ENCODE measurements at regions of chr5 and their contacts with region 1.

Region 1: GRCh38 chr5:151315998-151316597 is 12.5 kb upstream of the SLC36A3 start:
- DNase-seq: peak; percentile 74 to 81
- H3K4me3 ChIP-seq: no peak overlapping the region
- H3K4me3 Mint-ChIP-seq: no peak overlapping the region
- H3K27ac Mint-ChIP-seq: no peak overlapping the region
- H3K4me1 ChIP-seq: peaks cover 8% of the 10 kb centered on the region; the same call in 1 of the 2 replicates
- H3K4me1 Mint-ChIP-seq: peaks cover 13% of the 10 kb centered on the region
- H3K27me3 ChIP-seq: no peaks in the 10 kb centered on the region
- H3K27me3 Mint-ChIP-seq: no peaks in the 10 kb centered on the region
- CTCF ChIP-seq: peak; percentile 89 to 92

Region 2: DNA sequence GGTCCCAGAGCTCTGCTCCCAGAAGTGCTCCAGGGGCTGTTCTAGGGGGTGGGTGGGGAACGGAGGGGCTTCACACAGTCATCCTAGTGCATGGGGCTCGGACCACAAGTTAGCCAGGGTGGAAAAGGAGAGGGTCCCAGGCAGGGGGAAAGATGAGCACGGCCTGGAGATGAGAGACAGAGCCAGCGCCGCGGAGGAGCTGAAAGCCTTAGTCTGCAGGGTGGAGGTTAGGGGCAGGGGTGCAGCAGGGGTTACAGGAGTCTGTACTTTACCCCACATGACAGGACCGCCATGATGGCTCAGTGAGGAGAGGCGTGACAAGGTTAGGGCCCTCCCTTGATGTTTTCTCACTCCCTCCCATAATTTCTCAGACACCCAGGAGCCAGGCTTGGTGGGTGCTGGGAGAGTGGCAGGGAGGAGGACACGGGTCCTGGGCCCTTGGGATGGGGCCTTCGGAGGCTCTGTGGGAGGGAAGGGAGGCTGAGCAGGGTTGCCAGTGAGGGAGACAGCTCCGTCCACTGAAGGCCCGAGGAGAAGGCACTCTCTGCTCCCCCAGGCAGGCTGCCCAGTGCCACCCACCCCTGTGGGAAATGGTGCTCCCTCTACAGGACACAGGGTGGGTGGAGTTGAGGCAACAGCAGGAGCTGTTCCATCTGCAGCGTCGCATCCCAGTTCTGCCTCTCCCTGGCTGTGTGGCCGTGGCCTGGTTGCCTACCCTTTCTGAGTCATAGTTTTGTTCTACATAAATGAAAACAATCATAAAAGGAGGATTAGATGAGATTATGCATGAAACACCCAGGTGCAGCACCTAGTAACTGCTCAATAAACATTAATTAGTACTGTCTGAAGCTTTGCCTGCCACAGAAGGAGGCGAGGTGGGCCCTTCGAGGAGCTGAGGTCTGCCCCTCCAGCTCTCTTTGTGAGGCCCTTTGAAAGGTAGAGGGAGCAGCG is 742.0 kb before region 1 on chr5:
- CTCF ChIA-PET with region 1: no interaction called
- POLR2A ChIA-PET with region 1: no interaction called
- intact Hi-C with region 1: no loop called
- DNase-seq: peak; percentile 33 to 37
- H3K4me3 ChIP-seq: no peak overlapping the region
- H3K4me3 Mint-ChIP-seq: no peak overlapping the region
- H3K27ac Mint-ChIP-seq: peak overlapping the region; percentile 20
- H3K4me1 ChIP-seq: peaks cover 21% of the 10 kb centered on the region; the same call in 1 of the 2 replicates
- H3K4me1 Mint-ChIP-seq: peaks cover 7% of the 10 kb centered on the region
- H3K27me3 ChIP-seq: no peaks in the 10 kb centered on the region
- H3K27me3 Mint-ChIP-seq: no peaks in the 10 kb centered on the region
- CTCF ChIP-seq: peak in 1 of 2 experiments; percentile 32

Region 3: DNA sequence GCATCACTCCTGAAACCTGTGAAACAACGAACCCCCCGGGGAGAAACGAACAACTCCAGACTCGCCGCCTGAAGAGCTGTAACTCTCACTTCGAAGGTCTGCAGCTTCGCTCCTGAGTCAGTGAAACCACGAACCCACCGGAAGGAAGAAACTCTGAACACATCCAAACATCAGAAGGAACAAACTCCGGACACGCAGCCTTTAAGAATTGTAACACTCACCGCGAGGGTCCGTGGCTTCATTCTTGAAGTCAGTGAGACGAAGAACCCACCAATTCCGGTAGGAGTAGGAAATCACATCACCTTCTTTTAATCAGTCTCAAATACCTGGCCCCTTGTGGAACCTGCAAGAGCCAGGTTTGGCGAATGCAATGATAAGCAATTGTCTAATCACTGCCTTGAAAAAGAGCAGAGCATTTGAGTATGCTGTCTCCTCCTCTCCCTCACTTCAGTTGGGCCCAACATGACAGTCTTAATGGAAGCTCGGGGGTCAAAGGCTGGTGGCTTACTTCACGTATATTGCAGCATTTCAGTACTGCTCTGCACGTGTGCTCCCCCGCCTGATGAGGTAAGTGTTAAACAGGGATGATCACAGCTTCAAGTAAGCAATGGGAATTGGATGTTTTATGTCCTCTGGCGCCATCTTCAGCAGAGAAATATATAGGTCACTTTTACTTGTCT is 469.3 kb before region 1 on chr5:
- CTCF ChIA-PET with region 1: no interaction called
- POLR2A ChIA-PET with region 1: no interaction called
- intact Hi-C with region 1: no loop called
- DNase-seq: peak; percentile 78 to 79
- H3K4me3 ChIP-seq: no peak overlapping the region
- H3K4me3 Mint-ChIP-seq: no peak overlapping the region
- H3K27ac Mint-ChIP-seq: no peak overlapping the region
- H3K4me1 ChIP-seq: peaks cover 5% of the 10 kb centered on the region; the same call in 1 of the 2 replicates
- H3K4me1 Mint-ChIP-seq: no peaks in the 10 kb centered on the region
- H3K27me3 ChIP-seq: no peaks in the 10 kb centered on the region
- H3K27me3 Mint-ChIP-seq: no peaks in the 10 kb centered on the region
- CTCF ChIP-seq: peak; percentile 65 to 74

Region 4: DNA sequence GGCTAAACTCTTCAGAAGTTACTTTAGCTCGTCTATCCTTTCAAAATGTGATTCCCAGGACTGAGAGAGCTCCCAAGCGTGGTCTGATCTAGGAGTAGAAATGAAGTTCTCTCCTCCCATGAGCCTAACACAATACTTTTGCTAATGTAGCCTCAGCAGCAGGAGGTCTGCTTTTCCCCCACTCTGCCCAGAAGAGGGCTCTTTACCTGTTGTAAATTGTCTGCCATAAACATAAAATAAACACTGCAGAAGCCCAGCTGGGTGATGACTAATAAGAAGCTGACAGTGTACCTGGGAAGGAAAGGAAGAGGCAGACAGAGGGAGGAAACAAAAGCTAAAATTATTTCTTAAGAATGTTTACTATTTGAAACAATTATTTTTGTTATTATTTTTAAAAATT is 27.9 kb before region 1 on chr5:
- CTCF ChIA-PET with region 1: interaction called, 5 read pairs
- POLR2A ChIA-PET with region 1: no interaction called
- intact Hi-C with region 1: loop called (anchors 1 kb)
- DNase-seq: peak; percentile 50 to 53
- H3K4me3 ChIP-seq: no peak overlapping the region
- H3K4me3 Mint-ChIP-seq: no peak overlapping the region
- H3K27ac Mint-ChIP-seq: no peak overlapping the region
- H3K4me1 ChIP-seq: peaks cover 6% of the 10 kb centered on the region
- H3K4me1 Mint-ChIP-seq: peaks cover 12% of the 10 kb centered on the region
- H3K27me3 ChIP-seq: no peaks in the 10 kb centered on the region
- H3K27me3 Mint-ChIP-seq: no peaks in the 10 kb centered on the region
- CTCF ChIP-seq: peak in 1 of 2 experiments; percentile 67

Region 5: GRCh38 chr5:151338734-151339133 is 22.6 kb after region 1 on chr5:
- CTCF ChIA-PET with region 1: no interaction called
- POLR2A ChIA-PET with region 1: no interaction called
- intact Hi-C with region 1: no loop called
- DNase-seq: no peak
- H3K4me3 ChIP-seq: no peak overlapping the region
- H3K4me3 Mint-ChIP-seq: no peak overlapping the region
- H3K27ac Mint-ChIP-seq: no peak overlapping the region
- H3K4me1 ChIP-seq: no peaks in the 10 kb centered on the region
- H3K4me1 Mint-ChIP-seq: no peaks in the 10 kb centered on the region
- H3K27me3 ChIP-seq: no peaks in the 10 kb centered on the region; the same call in 1 of the 2 replicates
- H3K27me3 Mint-ChIP-seq: peaks cover 8% of the 10 kb centered on the region
- CTCF ChIP-seq: no peak

Region 6: GRCh38 chr5:151523335-151523734 is 207.2 kb after region 1 on chr5:
- CTCF ChIA-PET with region 1: no interaction called
- POLR2A ChIA-PET with region 1: no interaction called
- intact Hi-C with region 1: loop called (anchors 5 kb)
- DNase-seq: peak; percentile 55 to 59
- H3K4me3 ChIP-seq: no peak overlapping the region
- H3K4me3 Mint-ChIP-seq: no peak overlapping the region
- H3K27ac Mint-ChIP-seq: no peak overlapping the region
- H3K4me1 ChIP-seq: no peaks in the 10 kb centered on the region
- H3K4me1 Mint-ChIP-seq: no peaks in the 10 kb centered on the region
- H3K27me3 ChIP-seq: no peaks in the 10 kb centered on the region
- H3K27me3 Mint-ChIP-seq: no peaks in the 10 kb centered on the region
- CTCF ChIP-seq: peak; percentile 67 to 71

Region 7: DNA sequence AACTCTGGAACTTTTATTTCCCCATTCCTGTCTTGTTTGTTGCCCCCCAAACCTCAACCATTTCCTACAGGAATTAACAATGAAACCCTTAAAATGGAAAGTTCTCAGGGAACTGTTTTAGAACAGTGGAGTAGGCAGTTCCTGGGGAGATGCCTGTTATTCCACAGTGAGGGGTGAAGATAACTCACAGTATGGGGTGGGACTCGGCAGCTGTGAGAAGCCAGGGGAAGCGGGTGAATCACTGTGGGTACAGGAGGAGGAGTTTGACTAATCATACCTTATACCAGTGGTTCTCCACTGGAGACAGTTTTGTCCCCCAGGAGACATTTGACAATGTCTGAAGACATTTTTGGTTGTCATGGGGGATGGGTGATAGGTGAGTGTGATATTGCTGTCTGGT is 645.5 kb after region 1 on chr5:
- CTCF ChIA-PET with region 1: no interaction called
- POLR2A ChIA-PET with region 1: no interaction called
- intact Hi-C with region 1: no loop called
- DNase-seq: no peak
- H3K4me3 ChIP-seq: no peak overlapping the region
- H3K4me3 Mint-ChIP-seq: no peak overlapping the region
- H3K27ac Mint-ChIP-seq: no peak overlapping the region
- H3K4me1 ChIP-seq: no peaks in the 10 kb centered on the region
- H3K4me1 Mint-ChIP-seq: no peaks in the 10 kb centered on the region
- H3K27me3 ChIP-seq: no peaks in the 10 kb centered on the region; the same call in 1 of the 2 replicates
- H3K27me3 Mint-ChIP-seq: peaks cover 14% of the 10 kb centered on the region
- CTCF ChIP-seq: no peak

Measured in Caco-2 (cell line).